Heart left ventricle (tissue), 16 donors: ENCODE measurements at regions of chr5 and their contacts with region 1.

Region 1: DNA sequence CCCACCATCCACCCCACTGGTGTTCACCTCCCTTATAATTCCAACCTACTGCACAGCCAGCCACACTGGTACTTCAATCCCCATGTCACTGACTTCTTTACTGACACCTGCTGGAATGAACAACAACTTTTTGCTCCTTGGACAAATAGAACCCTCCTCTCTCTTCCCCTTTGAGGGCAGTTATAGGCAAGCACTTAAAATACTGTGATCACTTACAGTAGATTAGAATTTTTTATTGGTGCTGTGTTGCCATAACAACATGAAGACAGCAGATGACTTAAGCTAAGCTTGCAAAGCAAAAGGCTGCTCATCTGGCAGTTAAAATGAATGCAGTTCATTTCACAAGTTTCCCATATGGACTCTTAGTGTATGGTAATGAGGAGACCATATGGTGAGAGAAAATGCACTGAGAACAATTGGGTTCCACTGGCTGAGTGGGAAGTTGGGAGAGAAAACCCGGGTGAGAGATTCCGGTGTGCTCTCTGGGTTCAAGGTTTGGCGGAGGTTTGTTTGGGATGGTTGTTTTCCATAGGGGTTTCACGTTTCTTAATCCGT is 374.3 kb downstream of the EBF1 start:
- DNase-seq: no peak
- ATAC-seq: no peak
- H3K4me3 ChIP-seq: no peak overlapping the region
- H3K27ac ChIP-seq: peak overlapping the region in 1 of 12 donors; percentile 3
- H3K4me1 ChIP-seq: peaks cover 0 to 59% (median 18%) of the 10 kb centered on the region in 12 donors
- H3K27me3 ChIP-seq: no peaks in the 10 kb centered on the region
- CTCF ChIP-seq: no peak
- POLR2A ChIP-seq: no peak

Region 2: DNA sequence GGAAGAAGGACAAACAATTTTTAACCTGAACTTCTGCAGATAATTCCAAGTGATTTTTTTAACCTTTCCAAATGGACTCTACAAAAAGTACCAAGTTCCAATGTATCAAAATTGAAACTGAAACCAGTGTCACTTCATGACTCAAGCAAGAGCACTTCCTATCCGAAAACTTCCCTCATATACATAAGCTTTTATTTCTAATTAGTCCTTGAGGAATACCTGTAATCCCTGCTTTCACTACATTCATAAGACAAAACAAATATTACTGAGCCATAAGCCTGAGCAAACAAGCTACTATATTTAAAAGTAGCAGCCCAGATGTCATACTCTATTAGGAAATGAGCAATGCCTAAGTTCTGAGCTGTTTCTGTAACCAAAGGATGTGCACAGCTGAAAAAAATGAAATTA is 149.9 kb after region 1 on chr5:
- intact Hi-C with region 1: loop called in 2 of 10 experiments (anchors 10 kb)
- DNase-seq: no peak
- ATAC-seq: peak in 2 of 4 donors; percentile 62 to 67
- H3K4me3 ChIP-seq: peak overlapping the region in 10 of 12 donors; percentile 10 to 42 (median 22)
- H3K27ac ChIP-seq: peak overlapping the region in 11 of 12 donors; percentile 33 to 78 (median 69)
- H3K4me1 ChIP-seq: peaks cover 0 to 65% (median 29%) of the 10 kb centered on the region in 12 donors
- H3K27me3 ChIP-seq: no peaks in the 10 kb centered on the region
- CTCF ChIP-seq: no peak
- POLR2A ChIP-seq: no peak